Activated naive CD8-positive, alpha-beta T cell treated with anti-CD3 and anti-CD28 coated beads, Interleukin-2, amount 10 ng/mL, durations not matched to agents 7 days and 5 days (primary cell): ENCODE measurements at regions of chr3 and their contacts with region 1.

Region 1: DNA sequence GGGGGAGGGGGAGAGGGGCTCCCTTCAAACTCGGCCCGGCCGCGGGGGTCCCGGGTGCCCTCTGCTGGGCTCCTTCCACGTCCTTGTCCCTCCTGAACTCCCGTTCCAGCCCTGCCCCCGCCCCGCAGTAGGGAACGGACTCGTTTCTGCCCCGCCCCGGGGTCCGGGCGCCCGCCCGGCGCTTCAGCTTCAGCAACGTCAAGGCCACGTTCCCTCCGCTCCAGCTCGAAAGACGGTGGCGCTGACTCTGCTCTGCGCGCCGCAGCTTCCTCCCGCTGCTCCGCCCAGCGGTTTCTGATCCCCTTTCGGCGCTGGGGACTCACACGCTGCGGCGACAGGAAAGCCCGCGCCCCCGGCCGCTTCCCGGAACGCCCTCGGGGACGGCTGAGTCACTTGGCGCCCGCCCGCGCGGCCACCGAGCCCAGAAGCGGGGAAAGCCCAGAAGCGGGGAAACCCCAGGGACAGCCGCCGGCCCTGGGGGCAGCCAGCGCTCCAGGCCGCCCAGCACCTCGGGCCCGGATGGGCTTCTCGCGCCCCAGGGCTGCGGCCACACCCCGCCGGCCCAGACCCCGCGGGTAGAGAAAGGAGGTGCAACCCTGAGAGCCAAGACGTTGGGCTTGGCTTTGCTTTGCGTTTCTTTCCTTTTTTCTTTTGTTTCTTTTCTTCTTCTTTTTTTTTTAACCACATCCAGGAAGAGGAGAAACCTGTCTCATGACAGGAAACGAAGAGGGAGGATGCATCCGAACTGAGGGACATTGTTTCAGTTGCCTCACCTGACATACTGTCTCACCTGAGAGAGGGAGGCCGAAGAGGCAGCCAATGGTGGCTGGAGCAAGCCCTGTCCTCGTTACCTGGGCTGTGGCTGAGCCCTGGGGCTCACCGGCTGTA is 28.9 kb downstream of the ARHGAP31 start:
- DNase-seq: peak; percentile 92
- ATAC-seq: peak; percentile 89
- H3K4me3 Mint-ChIP-seq: peak overlapping the region; percentile 86
- H3K27ac Mint-ChIP-seq: peak overlapping the region; percentile 88
- H3K4me1 Mint-ChIP-seq: peaks cover 12% of the 10 kb centered on the region
- H3K27me3 Mint-ChIP-seq: peaks cover 22% of the 10 kb centered on the region

Region 2: GRCh38 chr3:119293871-119294695 is 29.0 kb before region 1 on chr3 and contains the start of gene ARHGAP31:
- POLR2A ChIA-PET with region 1: interaction called, 13 read pairs
- DNase-seq: peak; percentile 84
- ATAC-seq: peak; percentile 72
- H3K4me3 Mint-ChIP-seq: peak within 1 kb of the TSS; percentile 76
- H3K27ac Mint-ChIP-seq: peak within 1 kb of the TSS; percentile 70
- H3K4me1 Mint-ChIP-seq: peaks cover 37% of the 10 kb centered on the region
- H3K27me3 Mint-ChIP-seq: peaks cover 3% of the 10 kb centered on the region
- total RNA-seq, gene ARHGAP31: 1.6 to 1.7 TPM